GM23248 (cell line): ENCODE measurements at regions of chr10 and their contacts with region 1.

Region 1: GRCh38 chr10:123559066-123559822 is 106.9 kb upstream of the GPR26 start:
- DNase-seq: peak; percentile 70
- H3K4me3 ChIP-seq: no peak overlapping the region
- H3K27ac ChIP-seq: no peak overlapping the region
- H3K4me1 ChIP-seq: no peaks in the 10 kb centered on the region
- H3K27me3 ChIP-seq: peaks cover 14% of the 10 kb centered on the region; the same call in 1 of the 2 replicates

Region 2: DNA sequence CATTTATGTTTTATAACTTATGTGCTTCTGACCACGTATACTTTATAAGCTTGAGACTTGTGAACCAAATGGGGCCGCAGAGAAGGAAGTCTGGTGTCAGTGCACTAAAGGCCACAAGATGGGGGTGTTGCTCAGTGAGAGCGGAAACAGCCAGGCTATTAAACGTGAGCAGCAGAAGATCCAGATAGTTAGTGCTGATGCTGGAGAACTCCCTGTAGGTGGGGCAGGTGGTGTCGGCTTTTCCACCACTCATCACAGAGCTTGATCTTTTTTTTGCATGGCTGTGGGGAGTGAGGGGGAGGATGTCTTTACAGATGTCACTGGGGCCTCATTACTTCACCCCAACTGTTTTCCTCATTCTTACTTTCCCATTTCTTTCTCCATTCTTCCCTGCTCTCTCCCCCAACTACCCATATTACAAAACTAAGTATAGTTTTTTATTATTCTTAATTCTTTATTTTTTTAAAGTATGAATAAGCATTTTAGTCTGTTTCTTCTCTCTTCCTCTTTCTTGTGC is 515.8 kb before region 1 on chr10:
- in situ Hi-C with region 1: loop called (anchors 10 kb)
- DNase-seq: peak; percentile 76
- H3K4me3 ChIP-seq: no peak overlapping the region
- H3K27ac ChIP-seq: no peak overlapping the region
- H3K4me1 ChIP-seq: no peaks in the 10 kb centered on the region
- H3K27me3 ChIP-seq: no peaks in the 10 kb centered on the region

Region 3: GRCh38 chr10:123132576-123133477 is 426.4 kb before region 1 on chr10:
- in situ Hi-C with region 1: loop called (anchors 10 kb)
- DNase-seq: peak; percentile 86
- H3K4me3 ChIP-seq: peak overlapping the region; percentile 63
- H3K27ac ChIP-seq: no peak overlapping the region
- H3K4me1 ChIP-seq: no peaks in the 10 kb centered on the region
- H3K27me3 ChIP-seq: peaks cover 73% of the 10 kb centered on the region

Region 4: GRCh38 chr10:124155781-124156435 is 596.7 kb after region 1 on chr10:
- in situ Hi-C with region 1: no loop called
- DNase-seq: peak; percentile 15
- H3K4me3 ChIP-seq: no peak overlapping the region
- H3K27ac ChIP-seq: no peak overlapping the region
- H3K4me1 ChIP-seq: peaks cover 15% of the 10 kb centered on the region
- H3K27me3 ChIP-seq: peaks cover 8% of the 10 kb centered on the region